Right ventricle myocardium inferior (tissue), 1 donor: ENCODE measurements at regions of chr18 and their contacts with region 1.

Region 1: GRCh38 chr18:31101183-31102024 is 817 bp downstream of the DSC2 start:
- DNase-seq: peak; percentile 93
- ATAC-seq: peak; percentile 89

Region 2: GRCh38 chr18:31185186-31185950 is 84.0 kb after region 1 on chr18:
- intact Hi-C with region 1: no loop called
- DNase-seq: no peak
- ATAC-seq: no peak

Region 3: DNA sequence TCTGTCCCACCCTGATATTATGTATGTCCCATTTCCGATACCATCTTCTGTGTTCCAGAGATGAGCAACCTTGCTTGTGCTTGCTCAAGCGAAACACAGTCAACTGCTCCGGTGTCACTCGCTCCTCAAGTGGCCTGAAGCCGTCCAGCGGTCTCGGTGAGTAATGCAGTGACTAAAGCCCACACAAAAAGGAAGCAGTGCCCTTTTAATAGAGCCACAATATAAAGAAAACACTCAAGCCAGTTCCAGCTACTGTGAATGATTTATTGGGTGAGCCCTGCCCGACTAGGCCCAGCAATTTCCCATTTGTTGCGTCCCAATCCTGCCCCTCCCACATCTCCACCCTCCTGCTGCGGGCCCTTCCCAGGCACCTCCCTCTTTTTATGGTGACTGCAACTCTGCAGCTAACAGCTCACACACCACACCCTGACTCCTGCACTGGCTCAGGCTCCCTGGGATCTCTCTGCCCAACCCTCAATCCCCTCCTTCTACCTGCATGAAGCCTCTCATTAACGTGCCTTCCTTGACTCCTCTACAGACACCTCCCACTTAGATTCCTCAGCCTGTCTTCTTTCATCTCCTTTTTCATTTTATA is 105.5 kb after region 1 on chr18:
- intact Hi-C with region 1: loop called (anchors 5 kb)
- DNase-seq: peak; percentile 77
- ATAC-seq: peak; percentile 75

Region 4: DNA sequence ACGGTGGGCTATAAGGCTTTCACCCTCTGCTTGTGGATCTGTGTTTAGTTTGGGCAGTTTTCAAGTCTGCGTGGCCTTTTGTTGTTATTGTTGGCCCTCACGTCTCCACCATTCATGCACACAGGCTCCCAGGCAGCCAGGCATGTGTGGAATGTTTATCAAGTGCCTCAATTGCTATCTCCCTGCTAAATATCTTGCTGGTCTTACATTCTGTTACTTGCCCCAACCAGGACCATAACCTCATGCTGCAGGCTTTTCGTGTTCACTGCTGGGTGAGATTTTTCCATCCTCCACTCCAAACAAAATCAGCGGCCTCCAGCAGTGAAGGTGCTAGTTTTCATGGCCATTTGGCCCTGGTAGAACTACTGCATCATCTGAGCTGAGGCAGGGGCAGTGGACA is 124.3 kb after region 1 on chr18:
- intact Hi-C with region 1: loop called (anchors 2 kb)
- DNase-seq: peak; percentile 78
- ATAC-seq: peak; percentile 93

Region 5: DNA sequence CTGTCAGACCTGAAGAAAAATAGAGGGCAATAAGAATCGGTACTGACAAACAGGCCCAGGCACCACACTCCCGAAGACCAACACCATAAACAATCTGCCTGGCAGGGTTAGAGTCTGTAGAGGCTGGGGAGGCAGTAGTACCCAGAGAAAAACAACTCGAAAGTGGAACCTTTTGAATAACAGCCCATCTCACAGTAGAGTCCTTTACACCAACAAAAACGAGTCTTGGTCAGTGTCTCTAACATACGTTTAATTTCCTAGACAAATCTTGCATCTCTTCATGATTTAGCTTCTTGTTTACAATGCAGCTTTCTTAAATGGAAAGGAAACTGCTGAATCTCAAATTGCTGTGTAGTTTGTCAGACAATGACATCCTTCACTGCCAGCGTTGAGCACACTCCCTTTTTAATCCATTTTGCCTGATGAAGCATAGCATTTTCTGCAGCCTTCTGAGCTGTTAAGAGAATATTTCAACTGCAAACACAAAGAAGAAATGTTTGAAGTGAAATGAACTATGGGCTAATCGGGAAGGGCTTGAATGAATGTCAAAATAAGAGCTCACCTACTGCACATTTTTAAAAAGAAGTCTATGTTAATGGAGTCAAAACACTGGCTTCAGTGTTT is 143.5 kb after region 1 on chr18:
- intact Hi-C with region 1: loop called (anchors 5 kb)
- DNase-seq: no peak
- ATAC-seq: no peak

Region 6: GRCh38 chr18:31274915-31275314 is 173.5 kb after region 1 on chr18:
- intact Hi-C with region 1: loop called (anchors 5 kb)
- DNase-seq: no peak
- ATAC-seq: no peak

Region 7: GRCh38 chr18:31497837-31498573 is 396.6 kb after region 1 on chr18 and contains the start of gene DSG2:
- intact Hi-C with region 1: loop called (anchors 5 kb)
- DNase-seq: peak; percentile 85
- ATAC-seq: peak; percentile 97
- total RNA-seq, gene DSG2: 35.7 TPM